Brain microvascular endothelial cell (primary cell): ENCODE measurements at regions of chr5 and their contacts with region 1.

Region 1: GRCh38 chr5:134145779-134146581 is 30.8 kb downstream of the SKP1 start:
- DNase-seq: peak; percentile 54
- H3K4me3 ChIP-seq: no peak overlapping the region
- H3K27ac ChIP-seq: no peak overlapping the region
- H3K27me3 ChIP-seq: no peaks in the 10 kb centered on the region
- CTCF ChIP-seq: peak; percentile 98

Region 2: DNA sequence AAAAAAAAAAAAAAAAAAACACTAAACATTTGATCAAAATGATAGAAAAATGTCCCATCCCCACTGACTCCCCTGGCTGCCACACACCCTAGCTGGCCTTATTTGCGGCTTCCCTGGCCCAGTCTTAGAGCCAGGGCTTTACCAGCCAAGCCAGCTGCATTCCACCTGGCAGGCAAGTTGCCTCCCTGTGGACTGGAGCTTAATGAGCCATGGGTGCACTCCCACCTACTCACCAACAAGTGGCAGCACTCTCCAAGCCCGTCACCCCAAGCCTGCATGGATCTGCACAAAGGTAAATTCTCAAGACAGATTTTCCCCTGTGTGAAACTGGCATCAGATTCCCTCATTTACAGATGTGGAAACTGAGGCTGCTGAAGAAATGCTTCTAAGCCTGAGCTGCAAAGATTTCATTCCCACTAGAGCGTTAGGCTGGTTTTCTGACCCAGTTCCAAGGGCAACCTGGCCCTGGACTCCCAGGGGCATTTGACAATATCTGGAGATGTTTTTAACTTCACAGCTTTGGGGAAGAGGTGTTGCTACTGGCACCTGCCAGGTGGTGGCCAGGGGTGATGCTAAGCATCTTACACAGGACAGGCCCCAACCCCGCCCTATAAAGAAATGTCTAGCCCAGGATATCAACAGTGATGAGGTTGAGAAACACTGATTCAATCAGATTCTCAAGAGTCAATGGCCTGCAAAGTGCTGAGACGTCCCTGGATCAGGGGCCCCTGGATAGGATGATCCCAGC is 119.3 kb before region 1 on chr5:
- in situ Hi-C with region 1: loop called (anchors 25 kb)
- DNase-seq: peak; percentile 71
- H3K4me3 ChIP-seq: no peak overlapping the region
- H3K27ac ChIP-seq: no peak overlapping the region
- H3K27me3 ChIP-seq: no peaks in the 10 kb centered on the region
- CTCF ChIP-seq: peak; percentile 80